ENCODE measurements at regions of chr22 and their contacts with region 1.

Region 1: GRCh38 chr22:43263645-43264514 is 76.9 kb upstream of the TTLL12 start:
- DNase-seq: peak; percentile 99
- H3K4me3 ChIP-seq: peak overlapping the region in 5 of 7 experiments; percentile 21 to 61 (median 50)
- H3K27ac ChIP-seq: peak overlapping the region; percentile 95
- H3K4me1 ChIP-seq: peaks cover 13 to 86% (median 62%) of the 10 kb centered on the region in 4 experiments
- H3K27me3 ChIP-seq: no peaks in the 10 kb centered on the region

Region 2: GRCh38 chr22:43197271-43197941 is 66.5 kb before region 1 on chr22:
- CTCF ChIA-PET with region 1: no interaction called
- POLR2A ChIA-PET with region 1: no interaction called
- DNase-seq: peak in 2 of 3 donors; percentile 48 to 49
- H3K4me3 ChIP-seq: no peak overlapping the region
- H3K27ac ChIP-seq: no peak overlapping the region
- H3K4me1 ChIP-seq: peaks cover 0 to 4% (median under 1%) of the 10 kb centered on the region in 4 experiments
- H3K27me3 ChIP-seq: no peaks in the 10 kb centered on the region

Region 3: DNA sequence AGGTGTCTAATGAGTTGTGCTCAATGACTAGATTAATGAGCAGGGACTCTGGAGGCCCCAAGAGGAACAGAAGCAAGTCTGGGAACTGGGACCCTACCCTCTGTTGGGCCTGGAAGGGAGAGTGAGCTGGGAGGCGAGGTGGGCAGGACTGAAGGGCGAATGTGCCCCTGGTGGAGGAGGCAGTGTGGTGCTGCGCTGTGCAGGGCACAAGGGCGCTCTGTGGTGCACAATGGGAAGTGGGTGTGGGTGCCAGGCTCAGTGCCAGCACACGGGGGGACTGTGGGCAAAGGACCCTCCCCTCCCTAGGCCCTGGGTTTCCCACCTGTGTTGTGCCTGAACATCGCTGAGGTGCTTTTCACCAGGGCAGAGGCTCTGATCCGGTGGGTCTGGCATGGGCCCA is 19.5 kb before region 1 on chr22:
- CTCF ChIA-PET with region 1: interaction called, 97 read pairs
- POLR2A ChIA-PET with region 1: interaction called, 16 read pairs
- DNase-seq: peak in 2 of 3 donors; percentile 39 to 66
- H3K4me3 ChIP-seq: no peak overlapping the region
- H3K27ac ChIP-seq: no peak overlapping the region
- H3K4me1 ChIP-seq: peaks cover 0 to 54% (median 23%) of the 10 kb centered on the region in 4 experiments
- H3K27me3 ChIP-seq: no peaks in the 10 kb centered on the region

Region 4: GRCh38 chr22:43249789-43250471 is 13.9 kb before region 1 on chr22:
- CTCF ChIA-PET with region 1: interaction called, 97 read pairs
- POLR2A ChIA-PET with region 1: interaction called, 16 read pairs
- DNase-seq: no peak
- H3K4me3 ChIP-seq: no peak overlapping the region
- H3K27ac ChIP-seq: no peak overlapping the region
- H3K4me1 ChIP-seq: peaks cover 0 to 45% (median 20%) of the 10 kb centered on the region in 4 experiments
- H3K27me3 ChIP-seq: no peaks in the 10 kb centered on the region

Region 5: GRCh38 chr22:43385770-43386641 is 122.1 kb after region 1 on chr22:
- CTCF ChIA-PET with region 1: interaction called, 33 read pairs
- POLR2A ChIA-PET with region 1: no interaction called
- DNase-seq: peak; percentile 74 to 87 (median 86)
- H3K4me3 ChIP-seq: peak overlapping the region in 2 of 7 experiments; percentile 11 to 45
- H3K27ac ChIP-seq: no peak overlapping the region
- H3K4me1 ChIP-seq: peaks cover 0 to 24% (median 19%) of the 10 kb centered on the region in 4 experiments
- H3K27me3 ChIP-seq: peaks cover 0 to 5% (median 0%) of the 10 kb centered on the region in 5 experiments

Measured in common myeloid progenitor, CD34-positive (primary cell).